GM12878 (cell line): ENCODE measurements at regions of chr2 and their contacts with region 1.

Region 1: GRCh38 chr2:134118279-134119116 is 135.4 kb upstream of the MGAT5 start:
- DNase-seq: peak; percentile 96
- ATAC-seq: peak; percentile 62
- H3K4me3 ChIP-seq: peak overlapping the region; percentile 92
- H3K27ac ChIP-seq: peak overlapping the region; percentile 77
- H3K4me1 ChIP-seq: peaks cover 19% of the 10 kb centered on the region
- H3K27me3 ChIP-seq: no peaks in the 10 kb centered on the region
- CTCF ChIP-seq: peak; percentile 58 to 91 (median 80); a peak in 5 of 6 replicates
- EP300 ChIP-seq: peak; percentile 80 to 88
- POLR2A ChIP-seq: no peak
- RAD21 ChIP-seq: peak; percentile 99

Region 2: GRCh38 chr2:134104754-134105153 is 13.7 kb before region 1 on chr2:
- CTCF ChIA-PET with region 1: interaction called, 3 read pairs
- POLR2A ChIA-PET with region 1: no interaction called
- RAD21 ChIA-PET with region 1: interaction called, 3 read pairs
- SMC1A ChIA-PET with region 1: interaction called, 22 read pairs
- in situ Hi-C with region 1: no loop called
- intact Hi-C with region 1: no loop called
- DNase-seq: no peak
- ATAC-seq: no peak
- H3K4me3 ChIP-seq: no peak overlapping the region
- H3K27ac ChIP-seq: no peak overlapping the region
- H3K4me1 ChIP-seq: no peaks in the 10 kb centered on the region
- H3K27me3 ChIP-seq: no peaks in the 10 kb centered on the region; a peak in 1 of 4 replicates
- CTCF ChIP-seq: no peak
- EP300 ChIP-seq: no peak
- POLR2A ChIP-seq: no peak
- RAD21 ChIP-seq: no peak

Region 3: GRCh38 chr2:134218930-134219658 is 100.6 kb after region 1 on chr2:
- CTCF ChIA-PET with region 1: interaction called, 16 read pairs
- POLR2A ChIA-PET with region 1: interaction called, 4 read pairs
- RAD21 ChIA-PET with region 1: interaction called, 9 read pairs
- SMC1A ChIA-PET with region 1: interaction called, 29 read pairs
- in situ Hi-C with region 1: no loop called
- intact Hi-C with region 1: no loop called
- DNase-seq: no peak
- ATAC-seq: peak; percentile 46
- H3K4me3 ChIP-seq: no peak overlapping the region
- H3K27ac ChIP-seq: peak overlapping the region; percentile 70
- H3K4me1 ChIP-seq: peaks cover 38% of the 10 kb centered on the region
- H3K27me3 ChIP-seq: no peaks in the 10 kb centered on the region
- CTCF ChIP-seq: 0 out of 6 replicates have a peak, but pooled peaks of 1 of the 3 experiments have one; percentile 3
- EP300 ChIP-seq: no peak
- POLR2A ChIP-seq: no peak
- RAD21 ChIP-seq: no peak

Region 4: GRCh38 chr2:134261398-134262131 is 143.1 kb after region 1 on chr2:
- CTCF ChIA-PET with region 1: interaction called, 6 read pairs
- POLR2A ChIA-PET with region 1: no interaction called
- RAD21 ChIA-PET with region 1: interaction called, 11 read pairs
- SMC1A ChIA-PET with region 1: interaction called, 30 read pairs
- in situ Hi-C with region 1: no loop called
- intact Hi-C with region 1: no loop called
- DNase-seq: no peak
- ATAC-seq: peak; percentile 78
- H3K4me3 ChIP-seq: no peak overlapping the region
- H3K27ac ChIP-seq: peak overlapping the region; percentile 74
- H3K4me1 ChIP-seq: peaks cover 68% of the 10 kb centered on the region
- H3K27me3 ChIP-seq: no peaks in the 10 kb centered on the region
- CTCF ChIP-seq: no peak
- EP300 ChIP-seq: no peak
- POLR2A ChIP-seq: no peak
- RAD21 ChIP-seq: no peak

Region 5: GRCh38 chr2:134290358-134290757 is 171.9 kb after region 1 on chr2:
- CTCF ChIA-PET with region 1: interaction called, 7 read pairs
- POLR2A ChIA-PET with region 1: no interaction called
- RAD21 ChIA-PET with region 1: interaction called, 11 read pairs
- SMC1A ChIA-PET with region 1: interaction called, 7 read pairs
- in situ Hi-C with region 1: no loop called
- intact Hi-C with region 1: no loop called
- DNase-seq: peak; percentile 60
- ATAC-seq: peak; percentile 38
- H3K4me3 ChIP-seq: peak overlapping the region; percentile 11; the same call in 1 of the 2 replicates
- H3K27ac ChIP-seq: peak overlapping the region; percentile 82
- H3K4me1 ChIP-seq: peaks cover 94% of the 10 kb centered on the region
- H3K27me3 ChIP-seq: no peaks in the 10 kb centered on the region
- CTCF ChIP-seq: no peak
- EP300 ChIP-seq: peak in 1 of 2 experiments; percentile 22; a peak in 1 of 4 replicates
- POLR2A ChIP-seq: no peak
- RAD21 ChIP-seq: peak; percentile 3; the same call in 1 of the 2 replicates

Region 6: GRCh38 chr2:134411828-134412638 is 293.5 kb after region 1 on chr2:
- CTCF ChIA-PET with region 1: interaction called, 320 read pairs
- POLR2A ChIA-PET with region 1: interaction called, 24 read pairs
- RAD21 ChIA-PET with region 1: interaction called, 201 read pairs
- SMC1A ChIA-PET with region 1: interaction called, 163 read pairs
- in situ Hi-C with region 1: loop called (anchors 5 kb)
- intact Hi-C with region 1: loop called (anchors 1 kb)
- DNase-seq: peak; percentile 86
- ATAC-seq: peak; percentile 98
- H3K4me3 ChIP-seq: no peak overlapping the region
- H3K27ac ChIP-seq: peak overlapping the region; percentile 81
- H3K4me1 ChIP-seq: peaks cover 27% of the 10 kb centered on the region
- H3K27me3 ChIP-seq: no peaks in the 10 kb centered on the region
- CTCF ChIP-seq: peak; percentile 83 to 98 (median 93); a peak in 5 of 6 replicates
- EP300 ChIP-seq: peak in 1 of 2 experiments; percentile 23; a peak in 1 of 4 replicates
- POLR2A ChIP-seq: no peak
- RAD21 ChIP-seq: peak; percentile 98

Region 7: DNA sequence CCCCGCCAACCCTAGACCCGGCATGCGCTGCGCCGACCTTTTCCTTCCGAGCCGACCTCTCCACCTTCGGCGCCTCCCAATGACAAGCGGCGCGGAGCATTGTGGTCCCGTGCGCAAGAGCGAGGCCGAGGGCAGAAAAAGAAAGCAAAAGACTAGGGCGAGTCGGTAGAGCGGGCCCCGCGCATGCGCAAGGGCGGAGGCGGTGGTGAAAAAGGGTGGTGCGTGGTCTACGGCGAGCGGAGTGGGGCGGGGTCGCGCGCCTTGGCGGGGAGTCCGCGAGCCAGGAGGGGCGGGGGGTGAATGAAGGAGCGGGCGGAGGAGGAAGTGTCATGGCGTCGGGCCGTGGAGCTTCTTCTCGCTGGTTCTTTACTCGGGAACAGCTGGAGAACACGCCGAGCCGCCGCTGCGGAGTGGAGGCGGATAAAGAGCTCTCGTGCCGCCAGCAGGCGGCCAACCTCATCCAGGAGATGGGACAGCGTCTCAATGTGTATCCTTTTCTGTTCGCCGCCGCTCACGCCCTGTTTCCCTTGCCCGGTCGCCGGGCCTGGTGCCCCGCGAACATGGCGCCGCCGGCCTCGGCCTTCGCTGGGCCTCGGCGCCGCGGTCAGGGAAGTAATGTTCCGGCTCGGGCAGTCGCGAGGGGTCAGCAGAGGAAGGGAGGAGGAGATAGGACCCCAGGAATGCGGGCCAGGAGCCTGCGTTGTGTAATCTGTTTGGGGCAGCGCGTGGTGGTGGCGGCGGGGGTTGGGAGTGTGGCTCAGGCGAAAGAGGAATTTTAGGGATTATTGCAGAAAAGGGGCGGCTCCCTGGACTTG is 800.2 kb after region 1 on chr2 and contains the start of gene CCNT2:
- CTCF ChIA-PET with region 1: no interaction called
- POLR2A ChIA-PET with region 1: no interaction called
- RAD21 ChIA-PET with region 1: no interaction called
- SMC1A ChIA-PET with region 1: no interaction called
- in situ Hi-C with region 1: loop called (anchors 10 kb)
- intact Hi-C with region 1: loop called (anchors 10 kb)
- DNase-seq: peak; percentile 95
- ATAC-seq: peak; percentile 89
- H3K4me3 ChIP-seq: peak within 1 kb of the TSS; percentile 91
- H3K27ac ChIP-seq: peak within 1 kb of the TSS; percentile 99
- H3K4me1 ChIP-seq: peaks cover 6% of the 10 kb centered on the region
- H3K27me3 ChIP-seq: no peaks in the 10 kb centered on the region
- CTCF ChIP-seq: no peak
- EP300 ChIP-seq: peak in 1 of 2 experiments; percentile 35; a peak in 1 of 4 replicates
- POLR2A ChIP-seq: peak; percentile 91
- RAD21 ChIP-seq: no peak
- polyA plus RNA-seq, gene CCNT2: 6.0 to 7.6 TPM